ENCODE measurements at regions of chr2 and their contacts with region 1.

Region 1: DNA sequence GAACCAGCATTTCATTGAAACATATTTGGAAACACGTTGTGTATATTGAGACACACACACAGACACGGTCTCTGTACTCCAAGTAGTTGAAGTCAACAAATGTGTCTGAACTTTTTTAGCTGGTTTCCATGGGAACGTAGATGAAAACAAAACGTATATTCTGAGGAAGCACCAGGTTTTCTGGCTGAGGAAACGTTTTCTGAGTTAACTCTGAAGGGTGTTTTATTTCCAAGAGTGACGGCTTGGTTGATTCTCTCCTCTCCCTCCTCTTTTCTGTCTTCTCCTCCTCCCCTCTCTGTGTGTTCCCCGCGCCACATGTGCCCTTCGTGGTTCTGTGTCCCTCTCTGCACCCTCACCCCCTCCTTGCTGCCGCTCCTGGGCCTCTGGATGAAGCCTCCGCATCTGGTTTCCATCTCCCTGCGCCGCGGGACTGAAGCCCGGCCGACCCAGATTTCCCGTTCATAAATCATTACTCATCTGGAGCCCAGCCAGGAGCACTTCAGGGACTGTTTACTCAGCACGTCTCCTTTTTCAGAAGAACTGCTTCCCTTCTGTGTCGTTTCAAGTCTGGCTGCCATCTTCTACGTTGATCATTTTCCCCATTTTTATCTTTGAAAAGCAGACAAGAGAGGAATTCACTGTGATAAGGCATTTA is 122.7 kb downstream of the COL6A3 start:
- DNase-seq: peak; percentile 96
- ATAC-seq: peak; percentile 96

Region 2: DNA sequence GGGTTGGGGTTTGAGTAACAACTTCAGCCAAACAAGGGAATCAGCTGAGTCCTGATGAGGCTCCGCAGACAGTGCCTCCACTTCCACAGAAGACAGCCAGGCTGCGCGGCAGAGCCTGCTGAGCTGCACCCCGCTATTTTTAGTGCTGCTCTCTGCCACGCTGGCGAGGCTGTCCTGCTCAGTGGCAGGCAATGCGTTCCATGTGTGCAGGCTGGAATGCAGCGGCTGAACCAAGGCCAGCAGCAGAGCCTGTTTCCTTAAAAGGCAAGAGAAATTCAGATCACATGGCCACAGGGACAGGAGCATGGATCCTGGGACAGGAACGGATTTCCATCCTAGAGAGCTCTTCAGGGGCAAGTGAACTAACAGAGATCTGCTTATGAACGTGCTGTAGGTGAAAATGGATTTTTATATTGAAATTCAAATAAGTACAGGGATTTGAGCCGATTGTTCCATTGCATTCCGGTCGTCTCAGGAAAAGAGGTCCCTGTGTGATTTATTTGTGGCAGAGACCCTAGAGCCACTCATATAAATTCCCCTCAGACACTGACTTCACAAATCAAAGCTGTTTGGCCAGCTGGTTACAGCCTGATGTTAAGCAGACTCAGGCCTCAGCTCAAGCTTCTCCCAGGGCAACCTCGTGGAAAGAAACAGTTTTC is 24.0 kb after region 1 on chr2:
- intact Hi-C with region 1: loop called (anchors 2 kb)
- DNase-seq: peak; percentile 94
- ATAC-seq: peak; percentile 94

Region 3: DNA sequence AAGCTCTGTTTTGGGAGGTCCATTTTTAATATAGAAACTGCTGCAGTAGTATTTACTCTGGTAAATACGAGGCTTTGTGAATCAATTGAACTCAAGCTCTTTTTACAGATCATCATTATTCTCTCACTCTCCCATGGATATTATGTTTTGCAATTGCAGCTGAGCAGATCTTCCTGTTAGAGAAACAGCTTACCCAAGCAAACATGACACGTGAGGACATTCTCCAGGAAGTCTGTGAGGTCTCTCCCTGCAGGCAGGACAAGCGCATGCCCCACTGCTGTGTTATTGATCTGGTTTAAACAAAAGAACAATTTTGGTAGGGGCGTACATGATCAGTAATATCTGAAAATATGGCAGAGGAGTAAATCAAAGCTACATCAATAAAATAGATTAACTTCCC is 50.6 kb after region 1 on chr2:
- intact Hi-C with region 1: no loop called
- DNase-seq: no peak
- ATAC-seq: peak; percentile 51

Measured in Right ventricle myocardium superior (tissue), 1 donor.